ENCODE measurements at regions of chr13 and their contacts with region 1.

Region 1: DNA sequence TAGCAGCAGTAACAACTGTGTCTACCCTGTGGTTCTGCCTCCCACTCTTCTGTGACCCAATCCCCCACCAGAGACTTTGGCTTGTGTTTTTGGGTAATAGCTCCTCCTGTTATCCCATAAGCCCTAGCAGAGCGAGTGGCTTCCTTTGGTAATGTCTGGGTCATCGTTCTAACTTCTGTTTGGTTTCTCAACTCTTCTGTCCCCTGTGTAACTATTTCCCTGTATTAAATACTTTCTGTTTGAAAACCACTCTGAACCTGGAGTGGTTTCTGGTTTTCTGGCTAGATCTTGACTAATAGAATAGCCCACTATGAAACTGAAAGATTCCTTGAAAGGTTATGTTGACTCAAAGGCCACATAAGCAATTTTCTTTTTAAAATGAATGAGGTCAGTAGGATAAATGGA is 350.0 kb downstream of the DCT start:
- DNase-seq: no peak
- ATAC-seq: no peak
- H3K4me3 ChIP-seq: no peak overlapping the region
- H3K4me3 Mint-ChIP-seq: no peak overlapping the region
- H3K27ac ChIP-seq: no peak overlapping the region
- H3K27ac Mint-ChIP-seq: no peak overlapping the region
- H3K4me1 ChIP-seq: no peaks in the 10 kb centered on the region
- H3K4me1 Mint-ChIP-seq: no peaks in the 10 kb centered on the region
- H3K27me3 ChIP-seq: no peaks in the 10 kb centered on the region
- H3K27me3 Mint-ChIP-seq: no peaks in the 10 kb centered on the region
- CTCF ChIP-seq: no peak

Region 2: GRCh38 chr13:93963266-93964145 is 166.0 kb before region 1 on chr13:
- CTCF ChIA-PET with region 1: no interaction called
- POLR2A ChIA-PET with region 1: no interaction called
- intact Hi-C with region 1: no loop called
- DNase-seq: no peak
- ATAC-seq: no peak
- H3K4me3 ChIP-seq: no peak overlapping the region
- H3K4me3 Mint-ChIP-seq: no peak overlapping the region
- H3K27ac ChIP-seq: no peak overlapping the region
- H3K27ac Mint-ChIP-seq: no peak overlapping the region
- H3K4me1 ChIP-seq: no peaks in the 10 kb centered on the region
- H3K4me1 Mint-ChIP-seq: no peaks in the 10 kb centered on the region
- H3K27me3 ChIP-seq: no peaks in the 10 kb centered on the region
- H3K27me3 Mint-ChIP-seq: peaks cover 13% of the 10 kb centered on the region
- CTCF ChIP-seq: no peak

Region 3: DNA sequence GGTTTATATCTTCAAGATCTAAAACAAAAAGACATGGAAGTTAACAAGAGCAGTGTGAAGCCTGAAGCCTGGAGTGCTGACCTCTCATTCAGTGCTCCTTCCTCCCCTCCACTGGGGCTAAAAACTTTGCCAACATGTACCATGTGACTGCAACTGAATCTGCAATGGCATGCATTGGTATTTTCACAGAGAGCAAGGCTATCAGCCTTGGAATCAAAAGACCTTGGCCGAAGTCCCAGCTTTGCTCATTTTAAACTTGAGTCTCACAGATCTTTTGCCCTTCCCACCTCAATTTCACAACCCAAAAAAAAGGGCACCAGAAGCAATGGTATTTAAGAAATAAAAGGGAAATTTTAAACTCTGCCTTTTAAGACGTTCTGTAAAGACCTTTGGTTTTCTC is 24.9 kb after region 1 on chr13:
- CTCF ChIA-PET with region 1: no interaction called
- POLR2A ChIA-PET with region 1: no interaction called
- intact Hi-C with region 1: loop called in 1 of 2 experiments (anchors 2 kb)
- DNase-seq: no peak
- ATAC-seq: no peak
- H3K4me3 ChIP-seq: no peak overlapping the region
- H3K4me3 Mint-ChIP-seq: no peak overlapping the region
- H3K27ac ChIP-seq: no peak overlapping the region
- H3K27ac Mint-ChIP-seq: no peak overlapping the region
- H3K4me1 ChIP-seq: no peaks in the 10 kb centered on the region
- H3K4me1 Mint-ChIP-seq: no peaks in the 10 kb centered on the region
- H3K27me3 ChIP-seq: no peaks in the 10 kb centered on the region
- H3K27me3 Mint-ChIP-seq: peaks cover 13% of the 10 kb centered on the region
- CTCF ChIP-seq: no peak

Region 4: DNA sequence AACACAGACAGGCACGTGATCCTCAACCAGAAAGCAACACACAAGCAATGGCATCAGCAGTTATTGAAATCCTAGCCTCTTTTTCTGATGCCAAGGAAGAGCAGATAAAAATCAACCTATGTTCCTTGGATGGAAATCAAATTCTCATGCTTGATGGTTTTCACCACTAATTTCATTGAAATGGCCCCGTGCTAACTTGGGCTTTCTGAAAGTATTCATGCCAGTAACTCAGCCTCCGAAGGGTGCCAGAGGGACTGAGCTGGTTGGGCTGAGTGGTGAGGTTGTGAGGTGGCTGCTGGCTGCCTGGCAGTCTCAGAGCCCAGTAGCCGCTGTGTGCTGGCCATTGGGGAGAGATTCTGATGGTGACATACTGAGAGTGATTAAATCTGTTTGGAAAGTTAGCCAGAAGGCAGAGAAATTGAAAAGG is 40.7 kb after region 1 on chr13:
- CTCF ChIA-PET with region 1: no interaction called
- POLR2A ChIA-PET with region 1: no interaction called
- intact Hi-C with region 1: no loop called
- DNase-seq: no peak
- ATAC-seq: no peak
- H3K4me3 ChIP-seq: no peak overlapping the region
- H3K4me3 Mint-ChIP-seq: no peak overlapping the region
- H3K27ac ChIP-seq: no peak overlapping the region
- H3K27ac Mint-ChIP-seq: no peak overlapping the region
- H3K4me1 ChIP-seq: no peaks in the 10 kb centered on the region
- H3K4me1 Mint-ChIP-seq: no peaks in the 10 kb centered on the region
- H3K27me3 ChIP-seq: peaks cover 0 to 3% of the 10 kb centered on the region in 2 experiments
- H3K27me3 Mint-ChIP-seq: peaks cover 8% of the 10 kb centered on the region
- CTCF ChIP-seq: no peak

Region 5: GRCh38 chr13:94239135-94239534 is 109.6 kb after region 1 on chr13:
- CTCF ChIA-PET with region 1: no interaction called
- POLR2A ChIA-PET with region 1: no interaction called
- intact Hi-C with region 1: loop called in 1 of 2 experiments (anchors 1 kb)
- DNase-seq: peak in 2 of 9 experiments; percentile 29 to 52
- ATAC-seq: peak; percentile 89
- H3K4me3 ChIP-seq: no peak overlapping the region
- H3K4me3 Mint-ChIP-seq: no peak overlapping the region
- H3K27ac ChIP-seq: no peak overlapping the region
- H3K27ac Mint-ChIP-seq: no peak overlapping the region
- H3K4me1 ChIP-seq: peaks cover 32% of the 10 kb centered on the region
- H3K4me1 Mint-ChIP-seq: peaks cover 40% of the 10 kb centered on the region
- H3K27me3 ChIP-seq: no peaks in the 10 kb centered on the region
- H3K27me3 Mint-ChIP-seq: no peaks in the 10 kb centered on the region
- CTCF ChIP-seq: no peak